ENCODE measurements at regions of chr3 and their contacts with region 1.

Region 1: GRCh38 chr3:121995161-121996137 is 26.6 kb downstream of the ILDR1 start:
- DNase-seq: peak; percentile 74
- ATAC-seq: peak; percentile 72
- H3K4me3 ChIP-seq: 0 out of 2 replicates have a peak overlapping the region, but pooled peaks have one; percentile 32
- H3K27ac ChIP-seq: peak overlapping the region; percentile 67
- H3K4me1 ChIP-seq: peaks cover 66% of the 10 kb centered on the region
- H3K27me3 ChIP-seq: no peaks in the 10 kb centered on the region
- CTCF ChIP-seq: peak; percentile 56 to 71 (median 59)
- EP300 ChIP-seq: no peak; a peak in 1 of 4 replicates
- POLR2A ChIP-seq: no peak
- RAD21 ChIP-seq: peak; percentile 59

Region 2: GRCh38 chr3:121517953-121518655 is 477.3 kb before region 1 on chr3:
- CTCF ChIA-PET with region 1: no interaction called
- POLR2A ChIA-PET with region 1: no interaction called
- RAD21 ChIA-PET with region 1: no interaction called
- SMC1A ChIA-PET with region 1: no interaction called
- in situ Hi-C with region 1: no loop called
- intact Hi-C with region 1: no loop called
- DNase-seq: no peak
- ATAC-seq: no peak
- H3K4me3 ChIP-seq: no peak overlapping the region
- H3K27ac ChIP-seq: no peak overlapping the region
- H3K4me1 ChIP-seq: no peaks in the 10 kb centered on the region
- H3K27me3 ChIP-seq: no peaks in the 10 kb centered on the region
- CTCF ChIP-seq: no peak
- EP300 ChIP-seq: no peak
- POLR2A ChIP-seq: no peak
- RAD21 ChIP-seq: no peak

Region 3: GRCh38 chr3:121883507-121883906 is 111.9 kb before region 1 on chr3:
- CTCF ChIA-PET with region 1: interaction called, 13 read pairs
- POLR2A ChIA-PET with region 1: no interaction called
- RAD21 ChIA-PET with region 1: interaction called, 14 read pairs
- SMC1A ChIA-PET with region 1: interaction called, 14 read pairs
- in situ Hi-C with region 1: no loop called
- intact Hi-C with region 1: loop called (anchors 5 kb)
- DNase-seq: no peak
- ATAC-seq: peak; percentile 73
- H3K4me3 ChIP-seq: no peak overlapping the region
- H3K27ac ChIP-seq: no peak overlapping the region
- H3K4me1 ChIP-seq: no peaks in the 10 kb centered on the region
- H3K27me3 ChIP-seq: no peaks in the 10 kb centered on the region
- CTCF ChIP-seq: peak; percentile 21 to 38 (median 27); a peak in 1 of 6 replicates
- EP300 ChIP-seq: no peak
- POLR2A ChIP-seq: no peak
- RAD21 ChIP-seq: peak; percentile 48

Region 4: GRCh38 chr3:122021811-122022401 is 26.5 kb after region 1 on chr3 and contains the start of gene ILDR1:
- CTCF ChIA-PET with region 1: interaction called, 37 read pairs
- POLR2A ChIA-PET with region 1: interaction called, 120 read pairs
- RAD21 ChIA-PET with region 1: interaction called, 76 read pairs
- SMC1A ChIA-PET with region 1: interaction called, 454 read pairs
- in situ Hi-C with region 1: no loop called
- intact Hi-C with region 1: no loop called
- DNase-seq: no peak
- ATAC-seq: peak; percentile 55
- H3K4me3 ChIP-seq: peak within 1 kb of the TSS; percentile 72
- H3K27ac ChIP-seq: peak within 1 kb of the TSS; percentile 65
- H3K4me1 ChIP-seq: peaks cover 49% of the 10 kb centered on the region
- H3K27me3 ChIP-seq: no peaks in the 10 kb centered on the region
- CTCF ChIP-seq: no peak
- EP300 ChIP-seq: no peak
- POLR2A ChIP-seq: peak; percentile 60; the same call in 1 of the 2 replicates
- RAD21 ChIP-seq: no peak
- polyA plus RNA-seq, gene ILDR1: 1.3 to 1.8 TPM

Region 5: GRCh38 chr3:122067214-122067550 is 71.7 kb after region 1 on chr3:
- CTCF ChIA-PET with region 1: interaction called, 32 read pairs
- POLR2A ChIA-PET with region 1: interaction called, 3 read pairs
- RAD21 ChIA-PET with region 1: interaction called, 16 read pairs
- SMC1A ChIA-PET with region 1: interaction called, 67 read pairs
- in situ Hi-C with region 1: no loop called
- intact Hi-C with region 1: no loop called
- DNase-seq: no peak
- ATAC-seq: peak; percentile 66
- H3K4me3 ChIP-seq: peak overlapping the region; percentile 52; the same call in 1 of the 2 replicates
- H3K27ac ChIP-seq: peak overlapping the region; percentile 66
- H3K4me1 ChIP-seq: peaks cover 57% of the 10 kb centered on the region
- H3K27me3 ChIP-seq: no peaks in the 10 kb centered on the region
- CTCF ChIP-seq: no peak
- EP300 ChIP-seq: 0 out of 4 replicates have a peak, but pooled peaks have one; percentile 20 to 29
- POLR2A ChIP-seq: no peak
- RAD21 ChIP-seq: no peak

Region 6: DNA sequence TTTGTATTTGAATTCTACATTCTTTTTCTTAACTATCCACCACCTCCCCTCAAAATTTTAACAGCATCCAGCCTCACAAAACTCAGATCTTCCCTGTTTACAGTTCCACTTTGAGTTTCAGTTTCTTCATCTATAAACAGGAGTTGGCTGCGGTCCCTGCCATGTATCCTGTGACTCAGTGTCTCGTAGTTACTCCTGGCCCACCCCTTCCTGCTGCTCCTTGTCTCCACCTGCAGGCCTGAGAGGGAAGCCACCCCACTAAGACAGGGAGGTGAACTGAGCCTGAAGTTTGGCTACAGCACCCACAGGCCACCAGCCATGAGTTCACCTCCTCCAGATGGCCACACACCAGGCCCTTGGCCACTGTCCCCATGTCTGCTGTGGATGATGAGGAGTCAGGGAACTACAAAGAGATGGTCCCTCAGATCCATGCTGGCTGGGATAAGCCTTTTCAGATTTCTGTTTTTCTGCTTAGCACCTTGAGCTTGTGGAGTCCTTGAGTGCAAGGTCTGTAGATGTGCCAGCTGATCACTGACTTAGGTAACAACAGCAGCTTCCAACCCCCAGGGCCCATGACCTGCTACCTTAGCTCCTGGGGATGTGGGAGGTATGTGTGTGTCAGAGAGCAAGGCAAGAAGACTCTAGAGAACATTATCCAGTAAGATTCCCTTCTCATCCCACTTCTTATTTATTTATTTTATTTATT is 97.2 kb after region 1 on chr3:
- CTCF ChIA-PET with region 1: interaction called, 73 read pairs
- POLR2A ChIA-PET with region 1: interaction called, 7 read pairs
- RAD21 ChIA-PET with region 1: interaction called, 51 read pairs
- SMC1A ChIA-PET with region 1: interaction called, 882 read pairs
- in situ Hi-C with region 1: no loop called
- intact Hi-C with region 1: no loop called
- DNase-seq: no peak
- ATAC-seq: peak; percentile 80
- H3K4me3 ChIP-seq: no peak overlapping the region; the same call in 1 of the 2 replicates
- H3K27ac ChIP-seq: peak overlapping the region; percentile 59
- H3K4me1 ChIP-seq: peaks cover 59% of the 10 kb centered on the region
- H3K27me3 ChIP-seq: no peaks in the 10 kb centered on the region
- CTCF ChIP-seq: peak; percentile 60 to 84 (median 80)
- EP300 ChIP-seq: no peak
- POLR2A ChIP-seq: no peak
- RAD21 ChIP-seq: peak; percentile 76

Region 7: DNA sequence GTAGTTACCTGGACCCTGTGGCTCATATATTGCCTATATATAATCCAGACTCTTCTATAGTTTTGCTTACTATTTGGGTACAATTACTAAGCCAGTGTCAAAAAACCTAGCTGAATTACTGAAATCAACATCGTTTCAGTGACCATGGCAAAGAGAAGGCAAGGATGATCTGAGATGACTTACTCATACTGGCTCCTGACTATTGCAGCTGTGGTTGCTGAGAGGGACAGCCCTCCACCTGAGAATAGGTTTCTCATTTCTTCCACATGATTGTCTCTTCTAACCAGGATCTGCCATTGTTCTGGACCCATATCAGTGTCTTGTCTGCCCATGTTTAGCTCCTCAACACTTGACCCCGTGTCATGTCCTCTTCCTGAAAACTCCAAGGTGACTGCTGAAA is 218.2 kb after region 1 on chr3:
- CTCF ChIA-PET with region 1: no interaction called
- POLR2A ChIA-PET with region 1: no interaction called
- RAD21 ChIA-PET with region 1: no interaction called
- SMC1A ChIA-PET with region 1: no interaction called
- in situ Hi-C with region 1: no loop called
- intact Hi-C with region 1: no loop called
- DNase-seq: no peak
- ATAC-seq: no peak
- H3K4me3 ChIP-seq: no peak overlapping the region
- H3K27ac ChIP-seq: no peak overlapping the region
- H3K4me1 ChIP-seq: 0 out of 2 replicates have a peak, but pooled peaks cover 2% of the 10 kb centered on the region
- H3K27me3 ChIP-seq: no peaks in the 10 kb centered on the region
- CTCF ChIP-seq: no peak
- EP300 ChIP-seq: no peak
- POLR2A ChIP-seq: no peak
- RAD21 ChIP-seq: no peak